GM13976 (cell line): ENCODE measurements at regions of chr4 and their contacts with region 1.

Region 1: DNA sequence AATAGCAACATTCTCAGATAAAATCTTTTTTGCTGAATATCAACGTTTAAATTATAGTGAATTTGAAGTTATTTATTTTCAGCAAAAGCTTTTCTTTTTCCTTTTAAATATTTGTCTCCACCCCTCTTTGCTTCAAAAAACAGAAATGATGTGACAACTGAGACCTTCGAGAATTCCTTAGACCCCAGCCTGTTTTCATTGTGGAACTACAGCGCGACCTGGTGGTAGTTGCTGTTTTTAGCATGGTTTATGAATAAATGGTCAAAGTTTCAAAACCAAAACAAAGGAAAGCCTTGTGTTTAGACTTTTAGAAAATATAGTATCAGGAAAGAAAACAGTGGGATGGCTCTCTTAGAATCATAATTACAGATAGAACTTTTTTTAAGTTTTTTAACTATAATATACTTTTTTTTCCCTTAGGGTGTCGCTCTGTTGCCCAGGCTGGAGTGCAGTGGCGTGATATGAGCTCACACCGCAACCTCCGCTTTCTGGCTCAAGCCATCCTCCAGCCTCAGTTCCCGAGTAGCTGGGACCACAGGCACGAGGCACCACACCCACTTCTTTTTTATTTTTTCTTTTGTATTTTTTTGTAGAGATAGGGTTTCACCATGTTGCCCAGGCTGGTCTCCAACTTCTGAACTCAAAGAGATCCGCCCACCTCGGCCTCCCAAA is 26.8 kb upstream of the TMEM184C start:
- DNase-seq: peak; percentile 63
- CTCF ChIP-seq: peak; percentile 60

Region 2: GRCh38 chr4:147160908-147161513 is 429.4 kb before region 1 on chr4:
- in situ Hi-C with region 1: loop called (anchors 25 kb)
- DNase-seq: peak; percentile 70
- CTCF ChIP-seq: peak; percentile 70